Endothelial cell of umbilical vein (primary cell): ENCODE measurements at regions of chr5 and their contacts with region 1.

Region 1: DNA sequence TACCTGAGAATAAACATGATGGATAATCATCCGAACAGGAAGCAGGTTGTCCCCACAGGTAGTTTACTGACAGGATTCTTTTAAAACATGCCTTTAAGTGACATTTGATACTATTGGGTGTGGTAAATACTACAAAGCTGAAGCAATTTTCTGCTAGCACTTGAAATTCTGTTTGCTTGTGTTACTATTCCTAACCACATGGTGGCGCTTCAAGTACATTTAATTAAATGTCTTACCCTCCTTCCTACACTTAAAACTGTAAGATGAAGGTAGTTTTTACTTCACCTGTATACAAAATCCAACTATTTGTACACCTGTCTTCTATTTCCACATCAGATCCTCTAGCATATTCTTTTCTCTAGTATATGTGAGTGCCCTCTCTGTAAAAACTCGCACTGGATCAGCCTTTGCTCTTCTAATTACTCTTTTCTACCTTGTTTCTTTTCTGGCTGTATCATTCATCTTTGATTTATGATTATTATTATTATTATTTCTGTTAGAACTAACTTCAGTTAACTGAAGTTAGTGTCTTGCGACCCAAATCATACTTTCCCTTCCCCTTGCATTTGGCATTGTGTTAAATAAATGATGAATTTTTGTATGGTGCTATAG is 18.4 kb downstream of the SLC25A46 start:
- DNase-seq: peak; percentile 62
- H3K4me3 ChIP-seq: no peak overlapping the region
- H3K27ac ChIP-seq: no peak overlapping the region
- H3K4me1 ChIP-seq: no peaks in the 10 kb centered on the region
- H3K27me3 ChIP-seq: no peaks in the 10 kb centered on the region
- CTCF ChIP-seq: peak; percentile 47 to 48
- POLR2A ChIP-seq: no peak

Region 2: DNA sequence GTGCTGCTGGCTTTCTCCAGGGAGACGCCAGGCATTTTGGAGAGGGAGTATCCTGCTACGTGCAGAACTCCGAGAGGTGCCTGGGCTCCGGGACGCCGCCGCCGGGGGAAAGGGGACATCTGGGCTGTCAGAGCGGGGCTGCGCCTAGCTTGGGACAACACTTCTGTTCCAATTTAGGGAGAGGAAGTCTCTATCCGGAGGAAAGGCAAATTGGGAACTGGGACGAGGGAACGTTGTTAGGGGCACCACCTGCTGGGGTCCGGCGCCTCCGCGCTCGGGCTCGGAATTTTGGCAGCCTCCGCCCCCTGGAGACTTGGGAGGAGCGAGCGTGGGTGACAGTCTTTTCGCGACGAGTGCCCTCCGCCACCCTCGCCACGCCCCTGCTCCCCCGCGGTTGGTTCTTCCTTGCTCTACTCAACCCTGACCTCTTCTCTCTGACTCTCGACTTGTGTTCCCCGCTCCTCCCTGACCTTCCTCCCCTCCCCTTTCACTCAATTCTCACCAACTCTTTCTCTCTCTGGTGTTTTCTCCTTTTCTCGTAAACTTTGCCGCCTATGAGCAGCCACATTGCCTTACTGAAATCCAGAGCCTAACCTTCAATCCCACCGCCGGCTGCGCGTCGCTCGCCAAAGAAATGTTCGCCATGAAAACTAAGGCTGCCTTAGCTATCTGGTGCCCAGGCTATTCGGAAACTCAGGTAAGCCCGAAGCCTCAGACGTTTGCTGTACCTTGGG is 315.9 kb after region 1 on chr5:
- CTCF ChIA-PET with region 1: no interaction called
- POLR2A ChIA-PET with region 1: no interaction called
- dilution Hi-C with region 1: no loop called
- intact Hi-C with region 1: loop called (anchors 5 kb)
- DNase-seq: no peak
- H3K4me3 ChIP-seq: peak overlapping the region in 2 of 3 experiments; percentile 32 to 40
- H3K27ac ChIP-seq: no peak overlapping the region
- H3K4me1 ChIP-seq: peaks cover 3% of the 10 kb centered on the region
- H3K27me3 ChIP-seq: peaks cover 53 to 72% of the 10 kb centered on the region in 2 experiments
- CTCF ChIP-seq: no peak
- POLR2A ChIP-seq: no peak

Region 3: DNA sequence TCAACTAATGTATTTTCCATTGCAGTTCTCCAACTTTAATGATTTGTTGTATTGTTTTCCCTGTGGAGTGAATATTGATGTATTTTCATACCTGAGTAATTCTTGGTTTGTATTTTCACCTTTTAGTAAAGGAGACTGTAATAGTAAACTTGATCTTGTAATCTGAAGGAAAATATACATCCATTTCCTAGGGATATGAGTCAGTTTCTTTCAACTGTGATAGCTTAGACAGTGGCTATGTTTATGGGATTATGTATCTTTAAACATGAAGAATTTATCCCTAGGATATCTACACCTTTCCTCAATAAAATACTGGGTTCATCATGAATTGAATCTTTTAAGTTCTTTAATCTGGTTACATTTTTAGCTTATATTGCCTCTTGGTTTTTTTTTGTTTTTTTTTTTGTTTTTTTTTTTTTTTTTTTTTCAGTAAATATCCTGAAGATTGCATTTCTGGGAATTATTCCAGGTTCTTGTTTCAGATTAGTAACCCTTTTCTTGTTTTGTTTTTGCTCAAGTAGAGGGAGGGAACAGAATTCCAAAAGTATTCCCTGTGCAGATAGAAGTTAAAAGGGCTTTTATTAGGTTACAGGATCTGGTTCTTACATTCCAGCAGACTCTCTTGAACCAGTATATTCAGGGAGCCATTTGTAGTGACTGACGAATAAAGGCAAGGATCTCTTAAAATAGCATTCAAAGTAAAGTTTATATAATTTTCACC is 342.0 kb after region 1 on chr5:
- CTCF ChIA-PET with region 1: no interaction called
- POLR2A ChIA-PET with region 1: no interaction called
- dilution Hi-C with region 1: no loop called
- intact Hi-C with region 1: no loop called
- DNase-seq: peak; percentile 78
- H3K4me3 ChIP-seq: no peak overlapping the region
- H3K27ac ChIP-seq: peak overlapping the region; percentile 55
- H3K4me1 ChIP-seq: peaks cover 32% of the 10 kb centered on the region
- H3K27me3 ChIP-seq: no peaks in the 10 kb centered on the region
- CTCF ChIP-seq: no peak
- POLR2A ChIP-seq: no peak

Region 4: DNA sequence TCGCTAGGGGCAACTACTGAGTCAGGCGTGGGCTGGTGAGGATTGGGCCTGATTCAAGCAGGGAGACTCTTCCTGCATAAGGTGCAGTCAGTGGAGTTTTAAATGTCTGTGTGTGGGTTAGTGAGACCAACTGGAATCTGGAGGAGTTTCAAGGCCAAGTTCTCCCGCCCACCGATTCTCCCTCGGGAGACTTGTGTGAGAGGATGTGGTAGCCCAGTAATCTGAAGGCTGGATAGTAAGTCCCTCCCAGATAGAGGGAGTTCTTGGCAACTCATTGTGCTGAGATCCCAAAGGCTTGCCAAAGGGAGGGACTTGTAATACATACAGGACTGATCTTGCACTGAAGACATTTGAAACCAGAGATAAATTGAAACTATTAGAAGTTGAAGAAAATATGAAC is 386.7 kb after region 1 on chr5:
- CTCF ChIA-PET with region 1: interaction called, 4 read pairs
- POLR2A ChIA-PET with region 1: no interaction called
- dilution Hi-C with region 1: no loop called
- intact Hi-C with region 1: loop called (anchors 1 kb)
- DNase-seq: no peak
- H3K4me3 ChIP-seq: no peak overlapping the region
- H3K27ac ChIP-seq: no peak overlapping the region
- H3K4me1 ChIP-seq: peaks cover 8% of the 10 kb centered on the region
- H3K27me3 ChIP-seq: no peaks in the 10 kb centered on the region
- CTCF ChIP-seq: no peak
- POLR2A ChIP-seq: no peak

Region 5: GRCh38 chr5:111512375-111513130 is 755.3 kb after region 1 on chr5 and contains the start of gene STARD4:
- CTCF ChIA-PET with region 1: no interaction called
- POLR2A ChIA-PET with region 1: no interaction called
- dilution Hi-C with region 1: no loop called
- intact Hi-C with region 1: loop called (anchors 10 kb)
- DNase-seq: peak; percentile 97
- H3K4me3 ChIP-seq: peak within 1 kb of the TSS; percentile 72 to 97 (median 81)
- H3K27ac ChIP-seq: peak within 1 kb of the TSS; percentile 95
- H3K4me1 ChIP-seq: peaks cover 30% of the 10 kb centered on the region
- H3K27me3 ChIP-seq: no peaks in the 10 kb centered on the region
- CTCF ChIP-seq: no peak
- POLR2A ChIP-seq: peak; percentile 61
- total RNA-seq, gene STARD4: 77.1 and 87.8 TPM in 2 replicates